ENCODE measurements at regions of chr6 and their contacts with region 1.

Region 1: DNA sequence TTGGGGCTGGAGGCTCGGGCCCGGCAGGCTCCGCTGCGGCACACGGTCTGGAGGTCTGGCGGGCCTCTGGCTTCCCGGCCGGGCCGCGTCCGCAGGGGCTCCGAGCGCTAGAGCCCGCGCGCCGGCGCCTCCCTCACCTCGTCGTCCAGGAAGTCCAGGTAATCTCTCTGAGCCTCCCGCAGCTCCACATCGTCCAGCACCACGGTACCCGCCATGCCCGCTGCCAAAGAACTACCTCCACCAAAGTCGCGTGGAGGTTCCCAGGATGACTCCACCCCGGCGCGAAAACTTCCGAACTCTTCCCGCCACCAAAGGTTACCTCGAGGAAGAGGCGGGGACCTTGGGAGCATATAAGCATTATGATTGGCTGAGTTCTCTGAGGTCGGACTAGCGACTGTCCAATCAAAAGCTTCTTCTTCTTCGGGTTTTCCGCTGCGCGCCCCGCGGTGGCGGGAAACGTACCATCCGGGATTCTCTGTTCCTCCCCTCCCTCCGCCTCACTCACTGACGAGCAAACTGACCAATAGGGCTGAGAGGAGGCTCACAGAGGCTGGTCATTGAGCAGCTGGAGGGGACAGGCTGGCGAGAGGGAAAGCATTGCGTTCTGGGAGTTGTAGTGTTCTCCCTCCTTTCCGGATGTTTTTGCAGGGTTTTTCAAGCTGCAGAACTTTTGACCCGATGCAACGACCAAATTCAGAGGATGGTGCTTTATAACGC is at the start of gene MCM3:
- DNase-seq: peak; percentile 99
- ATAC-seq: peak; percentile 98
- H3K4me3 Mint-ChIP-seq: no peak within 1 kb of the TSS
- H3K27ac Mint-ChIP-seq: peak within 1 kb of the TSS; percentile 17
- H3K4me1 Mint-ChIP-seq: peaks cover 51% of the 10 kb centered on the region
- H3K27me3 Mint-ChIP-seq: no peaks in the 10 kb centered on the region
- total RNA-seq, gene MCM3: 217 to 220 TPM

Region 2: GRCh38 chr6:51983564-51983963 is 301.1 kb before region 1 on chr6:
- CTCF ChIA-PET with region 1: no interaction called
- POLR2A ChIA-PET with region 1: no interaction called
- DNase-seq: no peak
- ATAC-seq: no peak
- H3K4me3 Mint-ChIP-seq: no peak overlapping the region
- H3K27ac Mint-ChIP-seq: no peak overlapping the region
- H3K4me1 Mint-ChIP-seq: no peaks in the 10 kb centered on the region
- H3K27me3 Mint-ChIP-seq: peaks cover 4% of the 10 kb centered on the region

Region 3: DNA sequence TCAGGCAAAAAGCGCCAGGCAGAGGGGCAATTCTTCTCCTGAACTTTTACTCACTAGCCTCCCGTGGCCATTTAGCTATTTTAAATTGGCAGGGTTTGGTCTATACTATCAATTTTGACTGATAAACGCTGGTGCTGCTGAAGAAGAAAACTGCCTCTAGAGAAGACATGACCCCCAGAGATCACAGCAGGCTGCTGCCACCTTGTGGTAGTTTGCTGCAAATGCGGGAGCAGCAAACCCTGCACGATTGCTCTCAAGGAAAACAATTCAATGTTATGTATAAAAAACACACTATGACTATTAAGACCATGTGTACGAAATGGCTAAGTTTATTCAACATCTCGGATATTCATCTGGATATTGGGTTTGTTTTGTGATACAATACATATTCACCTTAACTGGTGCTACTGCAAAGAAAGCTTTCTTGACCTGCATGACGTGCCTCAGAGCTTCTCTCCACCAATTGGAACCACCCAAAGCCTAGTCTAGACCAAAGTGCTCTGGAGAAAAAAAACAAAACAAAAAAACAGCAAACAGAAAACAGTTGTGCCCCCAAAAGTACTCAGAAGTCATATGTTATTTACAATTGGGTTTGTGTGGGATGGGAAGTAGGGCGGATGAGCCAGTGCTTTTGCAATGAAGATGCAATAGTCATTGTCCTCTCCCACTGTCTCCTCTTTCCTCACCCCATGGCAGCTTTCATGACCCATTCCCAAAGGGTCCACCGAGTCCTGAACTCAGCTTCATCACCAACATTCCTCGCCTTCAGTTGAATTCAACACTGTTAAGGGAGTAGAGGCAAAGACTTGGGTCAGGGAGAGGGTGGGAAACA is 20.7 kb before region 1 on chr6:
- CTCF ChIA-PET with region 1: interaction called, 29 read pairs
- POLR2A ChIA-PET with region 1: interaction called, 6 read pairs
- DNase-seq: peak; percentile 80
- ATAC-seq: peak; percentile 75
- H3K4me3 Mint-ChIP-seq: no peak overlapping the region
- H3K27ac Mint-ChIP-seq: no peak overlapping the region
- H3K4me1 Mint-ChIP-seq: peaks cover 14% of the 10 kb centered on the region
- H3K27me3 Mint-ChIP-seq: no peaks in the 10 kb centered on the region

Region 4: DNA sequence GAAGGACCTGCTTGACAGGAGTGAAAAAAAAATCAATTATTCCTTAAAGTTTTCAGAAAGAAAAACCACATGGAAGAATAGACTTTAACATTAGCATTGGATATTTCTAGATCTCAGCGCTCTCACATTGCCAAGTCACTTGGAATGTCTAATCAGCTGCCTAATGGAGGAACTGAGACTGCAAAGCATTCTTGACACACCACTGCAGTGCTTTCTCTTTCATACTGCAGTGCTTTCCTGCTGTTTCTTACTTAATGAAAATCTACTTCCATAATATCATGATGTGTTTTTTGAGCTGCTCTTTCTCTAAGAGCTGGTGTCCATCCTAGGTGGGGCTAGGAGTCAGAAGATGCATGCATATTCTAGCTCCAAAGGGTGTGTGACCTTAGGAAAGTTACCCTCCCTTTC is 20.4 kb after region 1 on chr6:
- CTCF ChIA-PET with region 1: interaction called, 147 read pairs
- POLR2A ChIA-PET with region 1: interaction called, 10 read pairs
- DNase-seq: no peak
- ATAC-seq: peak; percentile 37
- H3K4me3 Mint-ChIP-seq: peak overlapping the region; percentile 59
- H3K27ac Mint-ChIP-seq: peak overlapping the region; percentile 83
- H3K4me1 Mint-ChIP-seq: peaks cover 62% of the 10 kb centered on the region
- H3K27me3 Mint-ChIP-seq: no peaks in the 10 kb centered on the region

Region 5: DNA sequence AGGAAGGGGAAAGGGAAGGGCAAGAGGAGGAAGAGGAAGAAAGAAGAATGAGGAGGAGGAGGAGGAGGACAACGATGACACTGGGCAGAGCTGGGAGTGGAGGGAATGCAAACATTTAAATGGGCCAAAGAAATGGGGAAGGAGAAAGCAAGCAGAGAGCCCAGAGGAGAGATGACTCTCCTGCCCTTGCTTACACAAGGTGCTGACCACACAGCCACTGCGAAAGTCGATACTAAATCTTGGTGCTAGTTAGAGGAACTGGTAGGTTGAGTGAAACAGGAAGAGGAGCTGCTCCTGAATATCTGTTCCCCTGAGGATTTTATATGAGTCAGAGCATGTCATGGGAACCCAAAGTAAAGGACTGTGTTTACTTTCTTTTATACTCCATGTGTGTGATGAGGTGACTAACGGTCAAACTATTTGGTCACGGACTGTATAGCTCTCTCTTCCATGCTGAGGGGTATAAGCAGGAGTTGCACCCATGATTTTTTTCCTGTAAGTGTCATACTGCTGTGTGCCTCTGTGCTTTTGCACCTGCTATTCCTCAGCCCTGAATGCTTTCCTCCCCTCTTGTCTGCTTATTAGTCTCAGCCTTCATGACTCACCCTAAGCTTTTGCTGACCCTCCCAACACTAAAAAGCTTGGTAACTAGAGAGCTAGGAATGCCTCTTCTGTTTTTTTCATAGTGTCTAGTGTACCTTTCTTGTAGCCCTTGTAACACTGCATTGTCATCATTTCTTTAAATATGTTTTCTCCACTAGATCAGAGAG is 67.8 kb after region 1 on chr6:
- CTCF ChIA-PET with region 1: interaction called, 11 read pairs
- POLR2A ChIA-PET with region 1: no interaction called
- DNase-seq: no peak
- ATAC-seq: no peak
- H3K4me3 Mint-ChIP-seq: no peak overlapping the region
- H3K27ac Mint-ChIP-seq: peak overlapping the region; percentile 23
- H3K4me1 Mint-ChIP-seq: peaks cover 29% of the 10 kb centered on the region
- H3K27me3 Mint-ChIP-seq: no peaks in the 10 kb centered on the region

Region 6: GRCh38 chr6:52389626-52390360 is 105.2 kb after region 1 on chr6:
- CTCF ChIA-PET with region 1: interaction called, 107 read pairs
- POLR2A ChIA-PET with region 1: interaction called, 24 read pairs
- DNase-seq: peak; percentile 72
- ATAC-seq: peak; percentile 57
- H3K4me3 Mint-ChIP-seq: peak overlapping the region; percentile 73
- H3K27ac Mint-ChIP-seq: peak overlapping the region; percentile 96
- H3K4me1 Mint-ChIP-seq: peaks cover 75% of the 10 kb centered on the region
- H3K27me3 Mint-ChIP-seq: no peaks in the 10 kb centered on the region

Region 7: GRCh38 chr6:52419809-52420670 is 135.4 kb after region 1 on chr6 and contains the start of gene EFHC1:
- CTCF ChIA-PET with region 1: interaction called, 96 read pairs
- POLR2A ChIA-PET with region 1: interaction called, 4 read pairs
- DNase-seq: peak; percentile 99
- ATAC-seq: peak; percentile 93
- H3K4me3 Mint-ChIP-seq: no peak within 1 kb of the TSS
- H3K27ac Mint-ChIP-seq: peak within 1 kb of the TSS; percentile 75
- H3K4me1 Mint-ChIP-seq: peaks cover 27% of the 10 kb centered on the region
- H3K27me3 Mint-ChIP-seq: no peaks in the 10 kb centered on the region
- total RNA-seq, gene EFHC1: 1.4 to 2.5 TPM